PC-9 (cell line): ENCODE measurements at regions of chr5 and their contacts with region 1.

Region 1: GRCh38 chr5:82396396-82396795 is 118.2 kb upstream of the RPS23 start:
- DNase-seq: no peak
- H3K4me3 ChIP-seq: no peak overlapping the region
- H3K27ac ChIP-seq: no peak overlapping the region
- H3K4me1 ChIP-seq: peaks cover 14% of the 10 kb centered on the region
- H3K27me3 ChIP-seq: no peaks in the 10 kb centered on the region
- CTCF ChIP-seq: no peak

Region 2: DNA sequence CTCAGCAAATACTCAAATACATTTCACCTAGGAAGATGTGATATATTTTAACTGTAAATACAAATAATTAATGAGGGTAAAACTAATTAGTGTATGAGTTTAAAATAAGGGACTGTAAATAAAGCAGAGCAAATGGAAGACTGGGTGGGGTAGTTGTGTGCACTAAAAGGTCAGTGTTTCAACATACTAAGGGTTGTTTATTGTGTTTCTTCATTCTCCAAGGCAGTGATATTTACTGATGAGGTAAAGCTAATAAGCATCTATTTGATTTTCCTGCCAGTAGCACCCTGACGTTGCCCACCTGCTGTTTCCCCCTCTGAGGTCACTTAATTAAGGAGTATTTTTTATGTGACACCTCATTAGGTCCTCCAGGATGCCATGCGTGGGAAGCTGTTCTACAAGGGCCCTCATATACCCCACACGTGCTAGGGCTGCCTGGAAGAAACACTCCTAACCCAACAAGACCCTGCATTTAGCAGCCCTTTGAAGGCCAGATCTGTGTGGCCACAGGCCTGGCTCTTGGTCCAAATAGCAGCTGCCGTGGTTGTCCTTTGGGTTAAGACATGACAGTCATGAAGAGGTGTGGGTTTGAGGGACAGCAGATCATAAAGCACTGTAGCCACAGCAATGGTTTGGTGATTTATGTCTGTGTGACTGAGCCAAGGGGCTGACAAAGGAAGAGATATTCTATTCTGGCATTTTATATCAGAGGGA is 20.7 kb before region 1 on chr5:
- CTCF ChIA-PET with region 1: no interaction called
- POLR2A ChIA-PET with region 1: interaction called, 19 read pairs
- intact Hi-C with region 1: no loop called
- DNase-seq: no peak
- H3K4me3 ChIP-seq: no peak overlapping the region
- H3K27ac ChIP-seq: no peak overlapping the region
- H3K4me1 ChIP-seq: no peaks in the 10 kb centered on the region
- H3K27me3 ChIP-seq: 0 out of 2 replicates have a peak, but pooled peaks cover 4% of the 10 kb centered on the region
- CTCF ChIP-seq: no peak

Region 3: GRCh38 chr5:82425591-82425990 is 29.2 kb after region 1 on chr5:
- CTCF ChIA-PET with region 1: no interaction called
- POLR2A ChIA-PET with region 1: no interaction called
- intact Hi-C with region 1: no loop called
- DNase-seq: no peak
- H3K4me3 ChIP-seq: no peak overlapping the region
- H3K27ac ChIP-seq: no peak overlapping the region
- H3K4me1 ChIP-seq: 0 out of 2 replicates have a peak, but pooled peaks cover 3% of the 10 kb centered on the region
- H3K27me3 ChIP-seq: no peaks in the 10 kb centered on the region
- CTCF ChIP-seq: no peak

Region 4: DNA sequence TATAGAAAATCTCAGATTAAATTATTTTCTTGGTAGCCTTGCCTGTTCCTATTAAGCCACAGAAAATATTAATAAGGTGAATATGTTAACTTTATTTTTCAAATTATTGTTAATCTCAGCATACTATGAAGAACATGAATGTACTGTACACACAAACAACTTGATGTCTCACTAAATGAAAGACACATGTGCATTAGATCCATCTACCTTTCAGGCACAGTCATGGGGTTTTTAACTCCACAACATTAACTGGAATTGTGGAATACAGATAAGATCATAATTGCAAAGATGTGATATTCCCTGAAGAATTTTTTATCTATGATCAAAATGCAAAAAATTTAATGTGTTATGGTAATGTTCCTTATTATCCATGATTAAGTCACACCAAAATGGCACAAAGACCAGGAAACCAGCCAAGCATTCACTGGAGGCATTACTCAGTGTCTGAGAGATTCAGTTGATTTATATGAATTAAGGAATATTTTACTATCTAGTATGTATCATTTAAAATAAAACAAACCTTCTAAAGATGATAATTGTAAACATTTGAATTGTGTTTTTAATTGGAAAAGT is 925.2 kb after region 1 on chr5:
- CTCF ChIA-PET with region 1: no interaction called
- POLR2A ChIA-PET with region 1: no interaction called
- intact Hi-C with region 1: no loop called
- DNase-seq: no peak
- H3K4me3 ChIP-seq: no peak overlapping the region
- H3K27ac ChIP-seq: no peak overlapping the region
- H3K4me1 ChIP-seq: no peaks in the 10 kb centered on the region
- H3K27me3 ChIP-seq: no peaks in the 10 kb centered on the region
- CTCF ChIP-seq: no peak